HepG2 (cell line): ENCODE measurements at regions of chr16 and their contacts with region 1.

Region 1: GRCh38 chr16:56988948-56989945 is at the start of gene NLRC5:
- DNase-seq: peak; percentile 52
- ATAC-seq: peak; percentile 88
- H3K4me3 ChIP-seq: peak within 1 kb of the TSS; percentile 82 to 87 (median 85)
- H3K27ac ChIP-seq: no peak within 1 kb of the TSS
- H3K4me1 ChIP-seq: peaks cover 66% of the 10 kb centered on the region
- H3K27me3 ChIP-seq: peaks cover 3 to 39% of the 10 kb centered on the region in 2 experiments
- CTCF ChIP-seq: peak; percentile 35; the same call in 1 of the 2 replicates
- EP300 ChIP-seq: no peak
- POLR2A ChIP-seq: peak in 1 of 2 experiments; percentile 60; a peak in 2 of 4 replicates
- RAD21 ChIP-seq: peak; percentile 18; the same call in 1 of the 2 replicates
- total RNA-seq, gene NLRC5: 3.1 and 6.3 TPM in 2 replicates

Region 2: DNA sequence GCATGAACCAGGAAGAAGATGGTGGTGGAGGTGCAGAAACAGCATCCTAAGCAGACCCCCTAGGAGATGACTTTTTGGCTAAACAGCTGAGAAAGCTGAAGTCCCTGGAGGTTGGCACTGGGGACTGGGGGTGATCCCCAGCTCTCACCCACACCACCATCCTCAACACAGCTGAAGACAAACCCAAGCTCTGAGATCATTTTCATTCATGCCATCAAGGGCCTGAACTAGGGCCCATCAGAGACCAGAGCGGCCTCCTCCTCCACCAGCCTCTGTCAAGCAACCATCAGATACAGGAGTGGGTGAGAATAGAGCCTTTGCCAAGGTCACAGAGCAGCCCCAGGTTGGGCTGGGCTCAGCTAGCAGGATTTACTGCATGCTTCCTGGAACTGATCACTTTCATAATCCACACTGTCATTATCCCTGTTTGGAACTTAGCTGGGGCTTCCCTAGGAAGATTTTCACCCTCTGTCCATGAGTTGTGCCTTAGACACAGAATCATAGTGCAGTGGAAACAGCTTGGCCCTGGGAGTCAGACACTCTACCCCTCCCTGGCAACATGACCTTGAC is 419.4 kb before region 1 on chr16:
- CTCF ChIA-PET with region 1: no interaction called
- POLR2A ChIA-PET with region 1: no interaction called
- in situ Hi-C with region 1: no loop called
- intact Hi-C with region 1: no loop called
- DNase-seq: no peak
- ATAC-seq: peak; percentile 59; the same call in 2 of the 3 replicates
- H3K4me3 ChIP-seq: no peak overlapping the region
- H3K27ac ChIP-seq: no peak overlapping the region
- H3K4me1 ChIP-seq: no peaks in the 10 kb centered on the region
- H3K27me3 ChIP-seq: peaks cover 0 to 10% of the 10 kb centered on the region in 2 experiments; a peak in 1 of 5 replicates
- CTCF ChIP-seq: no peak
- EP300 ChIP-seq: no peak
- POLR2A ChIP-seq: no peak
- RAD21 ChIP-seq: no peak

Region 3: GRCh38 chr16:56964243-56965148 is 24.8 kb before region 1 on chr16:
- CTCF ChIA-PET with region 1: interaction called, 4 read pairs
- POLR2A ChIA-PET with region 1: interaction called, 12 read pairs
- in situ Hi-C with region 1: no loop called
- intact Hi-C with region 1: loop called (anchors 2 kb)
- DNase-seq: peak; percentile 83
- ATAC-seq: peak; percentile 56
- H3K4me3 ChIP-seq: 0 out of 6 replicates have a peak overlapping the region, but pooled peaks of 1 of the 3 experiments have one; percentile 17
- H3K27ac ChIP-seq: peak overlapping the region; percentile 51
- H3K4me1 ChIP-seq: peaks cover 76% of the 10 kb centered on the region
- H3K27me3 ChIP-seq: peaks cover 2 to 13% of the 10 kb centered on the region in 2 experiments; a peak in 3 of 5 replicates
- CTCF ChIP-seq: peak; percentile 96
- EP300 ChIP-seq: peak; percentile 83 to 86
- POLR2A ChIP-seq: no peak
- RAD21 ChIP-seq: peak; percentile 94

Region 4: GRCh38 chr16:56972403-56973293 is 16.6 kb before region 1 on chr16:
- CTCF ChIA-PET with region 1: no interaction called
- POLR2A ChIA-PET with region 1: interaction called, 11 read pairs
- in situ Hi-C with region 1: no loop called
- intact Hi-C with region 1: no loop called
- DNase-seq: no peak
- ATAC-seq: peak; percentile 22
- H3K4me3 ChIP-seq: peak overlapping the region in 1 of 3 experiments; percentile 15; a peak in 1 of 6 replicates
- H3K27ac ChIP-seq: no peak overlapping the region
- H3K4me1 ChIP-seq: peaks cover 43% of the 10 kb centered on the region
- H3K27me3 ChIP-seq: peaks cover 0 to 22% of the 10 kb centered on the region in 2 experiments; a peak in 2 of 5 replicates
- CTCF ChIP-seq: no peak
- EP300 ChIP-seq: no peak
- POLR2A ChIP-seq: no peak
- RAD21 ChIP-seq: no peak